Ovary (tissue), 10 donors: ENCODE measurements at regions of chr15 and their contacts with region 1.

Region 1: DNA sequence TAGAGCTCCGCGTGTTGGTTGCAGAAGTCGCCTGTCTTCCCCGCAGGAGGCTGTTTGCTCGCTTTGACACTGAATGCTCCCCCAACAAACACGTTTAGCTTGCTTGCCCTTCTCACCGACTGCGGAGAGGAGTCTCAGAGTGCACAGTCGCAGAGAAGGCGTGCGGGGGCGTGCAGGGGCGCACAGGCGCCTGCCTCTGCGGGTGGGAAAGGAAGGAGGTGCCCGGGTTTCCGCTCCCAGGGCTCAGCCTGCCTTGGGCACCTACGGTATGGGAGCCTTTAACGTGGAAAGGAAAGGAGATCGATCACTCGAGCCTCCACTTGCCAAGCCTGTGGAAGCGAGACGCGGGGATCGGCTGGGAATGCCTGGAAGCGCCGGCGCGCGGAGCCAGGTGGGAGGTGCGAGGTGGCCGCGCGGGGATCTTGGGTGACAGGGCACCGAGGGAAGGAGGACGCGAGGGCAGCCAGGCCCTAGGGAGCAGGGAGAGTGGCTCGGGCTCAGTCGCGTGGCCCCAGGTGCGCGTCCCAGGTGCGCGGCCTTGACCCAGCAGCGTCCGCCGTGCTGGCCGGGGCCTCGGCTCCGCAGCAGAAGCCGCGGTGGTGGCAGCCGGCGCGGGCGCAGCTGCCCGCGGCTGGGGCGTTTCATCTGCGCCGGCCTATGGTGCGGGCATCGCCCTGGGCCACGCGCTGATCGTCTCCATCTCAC is at the start of gene FAN1:
- DNase-seq: peak; percentile 61 to 81 (median 78)
- H3K4me3 ChIP-seq: peak within 1 kb of the TSS; percentile 86
- H3K27ac ChIP-seq: peak within 1 kb of the TSS; percentile 40 to 59
- H3K4me1 ChIP-seq: peaks cover 2% of the 10 kb centered on the region
- H3K27me3 ChIP-seq: no peaks in the 10 kb centered on the region
- CTCF ChIP-seq: no peak
- EP300 ChIP-seq: no peak
- POLR2A ChIP-seq: peak; percentile 62
- total RNA-seq, gene FAN1: 10.1 to 24.1 (median 19.0) TPM

Region 2: GRCh38 chr15:30979457-30979856 is 75.8 kb after region 1 on chr15:
- intact Hi-C with region 1: loop called in 1 of 4 experiments (anchors 10 kb)
- DNase-seq: no peak
- H3K4me3 ChIP-seq: no peak overlapping the region
- H3K27ac ChIP-seq: no peak overlapping the region
- H3K4me1 ChIP-seq: peaks cover 1% of the 10 kb centered on the region
- H3K27me3 ChIP-seq: no peaks in the 10 kb centered on the region
- CTCF ChIP-seq: no peak
- EP300 ChIP-seq: no peak
- POLR2A ChIP-seq: no peak